ENCODE measurements at regions of chr17 and their contacts with region 1.

Region 1: DNA sequence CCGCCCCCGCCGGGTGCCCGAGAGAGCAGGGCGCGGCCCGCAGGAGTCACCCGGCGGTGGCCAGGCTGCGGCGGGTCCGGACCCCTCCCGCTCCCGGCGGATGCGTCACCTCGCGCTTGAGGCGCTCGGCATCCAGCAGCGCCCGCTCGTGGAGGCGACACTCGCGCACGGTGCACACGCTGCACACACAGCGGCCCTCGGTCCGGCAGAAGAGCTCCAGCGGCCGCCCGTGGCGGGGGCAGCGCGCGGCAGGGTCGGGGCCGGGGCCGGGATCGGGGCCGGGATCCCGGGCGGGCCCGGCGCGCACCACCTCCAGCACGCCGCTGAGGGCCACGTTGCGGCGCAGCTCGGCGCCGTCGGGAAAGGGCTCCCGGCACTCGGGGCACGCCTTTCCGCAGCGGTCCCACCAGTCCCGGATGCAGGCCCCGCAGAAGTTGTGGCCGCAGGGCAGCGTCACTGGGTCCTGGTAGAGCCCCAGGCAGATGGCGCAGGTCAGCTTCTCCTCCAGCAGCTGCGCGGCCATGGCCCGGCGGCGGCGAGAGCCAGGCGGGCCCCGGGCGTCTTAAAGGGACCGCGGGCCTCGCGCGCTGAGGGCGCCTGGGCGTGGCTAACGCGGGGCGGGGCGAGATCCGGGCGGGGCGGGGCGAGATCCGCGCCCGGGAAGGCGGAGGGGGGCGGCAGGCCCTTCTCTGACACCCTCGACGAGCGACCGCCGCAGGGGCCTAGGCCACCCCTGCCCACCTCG is at the start of gene TRIM65:
- DNase-seq: peak; percentile 63 to 87 (median 71)
- ATAC-seq: peak; percentile 91
- H3K4me3 ChIP-seq: peak within 1 kb of the TSS; percentile 65
- H3K4me3 Mint-ChIP-seq: peak within 1 kb of the TSS; percentile 55 to 92 (median 84)
- H3K27ac ChIP-seq: peak within 1 kb of the TSS; percentile 75
- H3K27ac Mint-ChIP-seq: peak within 1 kb of the TSS; percentile 66 to 91 (median 85)
- H3K4me1 ChIP-seq: peaks cover 8 to 12% of the 10 kb centered on the region in 2 donors
- H3K4me1 Mint-ChIP-seq: peaks cover 22 to 32% (median 26%) of the 10 kb centered on the region in 7 donors
- H3K27me3 ChIP-seq: no peaks in the 10 kb centered on the region
- H3K27me3 Mint-ChIP-seq: no peaks in the 10 kb centered on the region
- total RNA-seq, gene TRIM65: 20.9 to 37.7 (median 29.6) TPM

Region 2: GRCh38 chr17:75764711-75765421 is 131.7 kb before region 1 on chr17 and contains the start of gene GALK1:
- CTCF ChIA-PET with region 1: interaction called, 6 read pairs
- POLR2A ChIA-PET with region 1: interaction called, 5 read pairs
- intact Hi-C with region 1: loop called in 1 of 2 experiments (anchors 1 kb)
- DNase-seq: peak; percentile 56 to 78 (median 67)
- ATAC-seq: peak; percentile 97
- H3K4me3 ChIP-seq: peak within 1 kb of the TSS; percentile 71
- H3K4me3 Mint-ChIP-seq: peak within 1 kb of the TSS; percentile 62 to 84 (median 75)
- H3K27ac ChIP-seq: peak within 1 kb of the TSS; percentile 67
- H3K27ac Mint-ChIP-seq: peak within 1 kb of the TSS; percentile 32 to 87 (median 70)
- H3K4me1 ChIP-seq: peaks cover 11% of the 10 kb centered on the region in 2 donors
- H3K4me1 Mint-ChIP-seq: peaks cover 0 to 21% (median 10%) of the 10 kb centered on the region in 7 donors
- H3K27me3 ChIP-seq: no peaks in the 10 kb centered on the region
- H3K27me3 Mint-ChIP-seq: no peaks in the 10 kb centered on the region
- total RNA-seq, gene GALK1: 9.9 to 42.9 (median 22.1) TPM

Region 3: DNA sequence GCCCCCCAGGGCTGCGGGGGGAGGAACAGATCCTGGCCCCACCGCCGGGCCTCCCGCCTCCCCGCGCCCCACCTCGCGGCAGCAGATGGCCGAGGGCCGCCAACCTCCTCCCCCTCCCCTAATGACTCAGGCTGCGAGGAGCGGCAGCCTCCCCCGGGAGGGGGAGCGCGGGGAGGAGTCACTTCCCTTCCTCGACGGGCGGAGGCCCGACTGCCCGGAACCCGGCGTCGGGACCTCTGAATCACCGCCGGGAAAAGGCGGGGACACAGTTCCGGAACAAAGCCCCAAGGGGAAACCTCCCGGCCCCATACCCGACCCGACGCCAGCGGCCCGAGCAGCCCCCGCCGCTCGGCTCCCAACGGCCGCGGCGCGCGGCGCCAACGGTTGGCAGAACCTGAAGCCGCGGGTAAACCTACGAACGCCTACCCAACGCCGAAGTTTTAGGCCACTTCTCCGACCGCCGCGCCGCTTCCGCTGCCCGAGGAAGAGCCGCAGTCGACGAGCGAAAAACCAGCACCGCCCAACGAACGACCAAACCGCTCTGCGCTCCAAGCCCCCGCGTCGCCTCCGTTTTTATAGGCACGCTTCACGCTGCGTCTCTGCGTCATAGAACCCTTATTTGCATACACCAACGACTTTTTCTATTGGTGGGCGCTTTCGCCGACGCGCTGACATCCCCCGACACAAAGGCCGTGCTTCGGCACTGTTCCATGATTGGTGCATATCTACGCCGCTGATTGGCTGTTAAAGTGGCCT is 117.2 kb before region 1 on chr17:
- CTCF ChIA-PET with region 1: interaction called, 3 read pairs
- POLR2A ChIA-PET with region 1: interaction called, 18 read pairs
- intact Hi-C with region 1: loop called (anchors 1 to 2 kb)
- DNase-seq: peak; percentile 84 to 99 (median 96)
- ATAC-seq: peak; percentile 79
- H3K4me3 ChIP-seq: peak overlapping the region; percentile 85
- H3K4me3 Mint-ChIP-seq: peak overlapping the region; percentile 83 to 100 (median 98)
- H3K27ac ChIP-seq: peak overlapping the region; percentile 98
- H3K27ac Mint-ChIP-seq: peak overlapping the region; percentile 89 to 100 (median 99)
- H3K4me1 ChIP-seq: peaks cover 31 to 35% of the 10 kb centered on the region in 2 donors
- H3K4me1 Mint-ChIP-seq: peaks cover 19 to 68% (median 56%) of the 10 kb centered on the region in 7 donors
- H3K27me3 ChIP-seq: no peaks in the 10 kb centered on the region
- H3K27me3 Mint-ChIP-seq: peaks cover 0 to 3% (median 0%) of the 10 kb centered on the region in 5 donors

Region 4: GRCh38 chr17:75872434-75873351 is 23.9 kb before region 1 on chr17:
- CTCF ChIA-PET with region 1: interaction called, 20 read pairs
- POLR2A ChIA-PET with region 1: interaction called, 106 read pairs
- intact Hi-C with region 1: loop called (anchors 1 kb)
- DNase-seq: peak in 8 of 9 donors; percentile 41 to 75 (median 59)
- ATAC-seq: peak; percentile 68
- H3K4me3 ChIP-seq: no peak overlapping the region
- H3K4me3 Mint-ChIP-seq: peak overlapping the region in 5 of 10 donors; percentile 30 to 69 (median 48)
- H3K27ac ChIP-seq: peak overlapping the region; percentile 57
- H3K27ac Mint-ChIP-seq: peak overlapping the region; percentile 68 to 98 (median 83)
- H3K4me1 ChIP-seq: peaks cover 30 to 36% of the 10 kb centered on the region in 2 donors
- H3K4me1 Mint-ChIP-seq: peaks cover 24 to 50% (median 39%) of the 10 kb centered on the region in 7 donors
- H3K27me3 ChIP-seq: no peaks in the 10 kb centered on the region
- H3K27me3 Mint-ChIP-seq: peaks cover 0 to 2% (median 0%) of the 10 kb centered on the region in 5 donors

Region 5: DNA sequence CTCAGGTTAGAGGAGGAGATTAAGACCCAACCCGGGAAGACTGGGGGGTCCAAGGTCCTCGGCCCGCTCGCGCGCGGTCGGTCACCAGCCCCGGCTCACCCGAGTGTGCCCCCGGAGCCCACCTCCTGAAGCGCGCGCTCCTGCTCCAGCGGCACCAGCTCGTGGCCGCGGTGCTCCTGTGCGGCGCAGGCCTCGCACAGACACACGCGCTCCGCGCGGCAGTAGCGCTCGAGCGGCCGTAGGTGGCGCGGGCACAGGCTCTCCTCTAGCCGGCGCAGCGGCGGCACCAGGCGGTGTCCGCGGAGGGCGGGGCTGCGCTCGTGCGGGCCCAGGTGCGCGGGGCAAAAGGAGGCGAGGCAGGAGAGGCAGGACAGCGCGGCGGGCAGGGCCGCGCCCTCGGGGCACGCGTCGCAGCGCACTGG is 18.8 kb before region 1 on chr17:
- CTCF ChIA-PET with region 1: interaction called, 20 read pairs
- POLR2A ChIA-PET with region 1: interaction called, 106 read pairs
- intact Hi-C with region 1: loop called (anchors 1 kb)
- DNase-seq: peak; percentile 56 to 77 (median 69)
- ATAC-seq: peak; percentile 89
- H3K4me3 ChIP-seq: peak overlapping the region; percentile 74
- H3K4me3 Mint-ChIP-seq: peak overlapping the region; percentile 83 to 99 (median 90)
- H3K27ac ChIP-seq: peak overlapping the region; percentile 70
- H3K27ac Mint-ChIP-seq: peak overlapping the region; percentile 67 to 97 (median 89)
- H3K4me1 ChIP-seq: peaks cover 25 to 30% of the 10 kb centered on the region in 2 donors
- H3K4me1 Mint-ChIP-seq: peaks cover 28 to 57% (median 50%) of the 10 kb centered on the region in 7 donors
- H3K27me3 ChIP-seq: no peaks in the 10 kb centered on the region
- H3K27me3 Mint-ChIP-seq: peaks cover 0 to 28% (median 0%) of the 10 kb centered on the region in 5 donors

Region 6: GRCh38 chr17:75940724-75941441 is 44.3 kb after region 1 on chr17 and contains the start of gene FBF1:
- CTCF ChIA-PET with region 1: interaction called, 3 read pairs
- POLR2A ChIA-PET with region 1: interaction called, 4 read pairs
- intact Hi-C with region 1: loop called in 1 of 2 experiments (anchors 2 kb)
- DNase-seq: peak; percentile 74 to 92 (median 82)
- ATAC-seq: peak; percentile 100
- H3K4me3 ChIP-seq: peak within 1 kb of the TSS; percentile 89
- H3K4me3 Mint-ChIP-seq: peak within 1 kb of the TSS; percentile 77 to 93 (median 90)
- H3K27ac ChIP-seq: peak within 1 kb of the TSS; percentile 86
- H3K27ac Mint-ChIP-seq: peak within 1 kb of the TSS; percentile 74 to 94 (median 89)
- H3K4me1 ChIP-seq: peaks cover 5 to 11% of the 10 kb centered on the region in 2 donors
- H3K4me1 Mint-ChIP-seq: peaks cover 9 to 19% (median 11%) of the 10 kb centered on the region in 7 donors
- H3K27me3 ChIP-seq: no peaks in the 10 kb centered on the region
- H3K27me3 Mint-ChIP-seq: no peaks in the 10 kb centered on the region
- total RNA-seq, gene FBF1: 19.9 to 48.1 (median 29.0) TPM

Region 7: GRCh38 chr17:77019955-77020379 is 1123.4 kb after region 1 on chr17:
- CTCF ChIA-PET with region 1: no interaction called
- POLR2A ChIA-PET with region 1: no interaction called
- intact Hi-C with region 1: no loop called
- DNase-seq: no peak
- ATAC-seq: no peak
- H3K4me3 ChIP-seq: no peak overlapping the region
- H3K4me3 Mint-ChIP-seq: no peak overlapping the region
- H3K27ac ChIP-seq: no peak overlapping the region
- H3K27ac Mint-ChIP-seq: no peak overlapping the region
- H3K4me1 ChIP-seq: no peaks in the 10 kb centered on the region
- H3K4me1 Mint-ChIP-seq: no peaks in the 10 kb centered on the region
- H3K27me3 ChIP-seq: no peaks in the 10 kb centered on the region
- H3K27me3 Mint-ChIP-seq: peaks cover 0 to 20% (median 0%) of the 10 kb centered on the region in 5 donors

Region 8: GRCh38 chr17:77131904-77132303 is 1235.3 kb after region 1 on chr17:
- CTCF ChIA-PET with region 1: no interaction called
- POLR2A ChIA-PET with region 1: no interaction called
- intact Hi-C with region 1: no loop called
- DNase-seq: no peak
- ATAC-seq: no peak
- H3K4me3 ChIP-seq: no peak overlapping the region
- H3K4me3 Mint-ChIP-seq: no peak overlapping the region
- H3K27ac ChIP-seq: no peak overlapping the region
- H3K27ac Mint-ChIP-seq: peak overlapping the region in 4 of 9 donors; percentile 3 to 43 (median 33)
- H3K4me1 ChIP-seq: peaks cover 6 to 12% of the 10 kb centered on the region in 2 donors
- H3K4me1 Mint-ChIP-seq: peaks cover 14 to 53% (median 30%) of the 10 kb centered on the region in 7 donors
- H3K27me3 ChIP-seq: no peaks in the 10 kb centered on the region
- H3K27me3 Mint-ChIP-seq: no peaks in the 10 kb centered on the region

Measured in naive thymus-derived CD4-positive, alpha-beta T cell (primary cell).